Mammary epithelial cell (primary cell): ENCODE measurements at regions of chr20 and their contacts with region 1.

Region 1: GRCh38 chr20:50790651-50791277 is 4.1 kb upstream of the BCAS4 start:
- DNase-seq: peak; percentile 83
- H3K4me3 ChIP-seq: no peak overlapping the region
- H3K27ac ChIP-seq: peak overlapping the region; percentile 83
- H3K4me1 ChIP-seq: peaks cover 14% of the 10 kb centered on the region
- H3K27me3 ChIP-seq: no peaks in the 10 kb centered on the region
- CTCF ChIP-seq: peak; percentile 73 to 92

Region 2: DNA sequence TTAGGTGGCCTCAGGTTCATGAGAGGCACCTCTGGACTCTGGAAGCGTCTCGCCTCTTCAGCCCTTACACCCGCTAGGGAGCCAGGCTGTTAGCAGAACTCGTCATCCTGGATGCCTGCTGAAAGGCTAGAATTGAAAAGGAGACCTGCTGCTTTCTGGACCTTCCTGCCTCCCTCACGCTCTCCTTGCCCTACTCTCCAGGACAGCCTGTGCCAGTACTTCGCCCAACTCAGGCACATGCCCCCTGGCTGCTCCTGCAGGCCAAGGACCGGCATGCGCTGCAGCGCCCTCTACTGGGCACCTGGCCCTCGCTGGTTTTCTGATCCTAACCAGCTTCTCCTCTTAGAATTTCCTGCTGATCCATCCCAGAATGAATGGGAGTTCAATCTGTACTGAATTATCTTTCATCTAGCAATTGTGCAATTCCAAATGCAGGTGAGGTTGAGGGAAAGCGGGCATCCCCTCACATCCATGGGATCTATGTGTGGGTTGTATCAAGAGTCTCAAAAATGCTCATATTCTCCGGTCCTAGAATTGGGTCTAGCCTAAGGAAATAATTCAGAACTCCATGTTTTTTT is 202.6 kb before region 1 on chr20:
- CTCF ChIA-PET with region 1: no interaction called
- dilution Hi-C with region 1: no loop called
- in situ Hi-C with region 1: no loop called
- intact Hi-C with region 1: loop called (anchors 5 kb)
- DNase-seq: peak; percentile 54
- H3K4me3 ChIP-seq: no peak overlapping the region
- H3K27ac ChIP-seq: no peak overlapping the region
- H3K4me1 ChIP-seq: peaks cover 25% of the 10 kb centered on the region
- H3K27me3 ChIP-seq: no peaks in the 10 kb centered on the region
- CTCF ChIP-seq: peak; percentile 96 to 99

Region 3: DNA sequence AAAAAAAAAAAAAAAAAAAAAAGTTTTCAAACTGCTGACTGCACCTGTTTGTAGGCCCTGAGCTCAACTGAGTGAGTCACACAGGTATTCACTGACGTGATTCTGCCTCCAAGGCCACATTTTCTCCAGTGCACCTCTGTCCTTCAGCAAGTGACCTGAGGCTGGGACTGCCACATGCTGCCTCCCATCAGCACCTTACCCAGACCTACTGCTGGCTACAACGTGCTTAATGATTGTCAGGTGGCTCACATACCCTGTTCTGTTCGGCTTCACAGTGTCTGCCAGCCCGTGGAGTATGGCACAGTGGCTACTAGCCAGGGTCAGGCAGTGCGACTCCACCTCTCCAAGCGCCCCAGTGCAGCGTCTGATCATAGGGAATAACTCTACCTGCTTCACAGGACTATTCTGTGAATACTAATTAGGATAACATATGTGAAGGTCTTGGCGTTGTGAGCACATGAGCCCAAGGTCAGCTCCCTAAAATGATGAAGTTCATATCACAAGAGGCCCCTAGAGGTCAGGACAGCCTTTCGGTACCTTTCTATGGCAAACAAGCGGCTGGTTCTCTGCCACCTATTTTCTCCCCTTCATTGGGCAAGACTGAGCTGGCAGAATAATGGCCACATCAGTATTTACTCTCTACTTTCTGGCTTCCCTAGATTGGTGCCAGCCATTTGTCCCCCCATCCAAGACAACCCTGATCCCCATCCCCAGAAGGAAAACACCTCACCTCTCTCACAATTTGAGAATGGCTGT is 127.5 kb before region 1 on chr20:
- CTCF ChIA-PET with region 1: interaction called, 11 read pairs
- dilution Hi-C with region 1: loop called (anchors 10 kb)
- in situ Hi-C with region 1: no loop called
- intact Hi-C with region 1: loop called (anchors 1 kb)
- DNase-seq: peak; percentile 71
- H3K4me3 ChIP-seq: no peak overlapping the region
- H3K27ac ChIP-seq: no peak overlapping the region
- H3K4me1 ChIP-seq: peaks cover 4% of the 10 kb centered on the region
- H3K27me3 ChIP-seq: no peaks in the 10 kb centered on the region
- CTCF ChIP-seq: peak; percentile 35 to 53

Region 4: DNA sequence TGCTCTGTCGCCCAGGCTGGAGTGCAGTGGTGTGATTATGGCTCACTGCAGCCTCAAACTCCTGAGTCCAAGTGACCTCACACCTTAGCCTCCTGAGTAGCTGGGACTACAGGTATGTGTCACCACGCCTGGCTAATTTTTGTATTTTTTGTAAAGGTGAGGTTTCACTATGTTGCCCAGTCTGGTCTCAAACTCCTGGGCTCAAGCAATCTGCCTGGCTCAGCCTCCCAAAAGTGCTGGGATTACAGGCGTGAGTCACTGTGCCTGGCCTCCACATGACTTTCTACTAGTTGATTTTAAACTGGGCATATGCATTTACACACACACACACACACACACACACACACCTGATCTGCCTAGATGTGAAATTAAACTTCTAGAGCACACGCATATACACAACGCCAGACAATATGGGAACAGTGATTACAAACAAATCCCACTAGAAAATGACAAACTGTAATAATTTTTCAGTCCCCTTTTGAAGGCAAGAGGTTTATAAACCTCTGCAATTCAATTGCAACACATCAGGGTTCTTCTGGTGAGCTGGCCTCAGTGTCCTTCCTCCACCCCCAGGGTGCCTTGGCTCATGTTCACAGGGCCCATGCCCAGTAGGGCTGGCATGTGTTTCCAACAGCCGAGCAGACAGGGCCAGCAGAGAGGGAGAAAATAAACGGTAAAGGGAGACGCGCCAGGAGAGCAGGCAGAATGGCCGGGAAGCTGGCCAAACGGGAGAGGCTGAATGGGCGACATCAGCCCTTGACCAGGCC is 28.1 kb before region 1 on chr20:
- CTCF ChIA-PET with region 1: interaction called, 9 read pairs
- dilution Hi-C with region 1: no loop called
- in situ Hi-C with region 1: no loop called
- intact Hi-C with region 1: loop called (anchors 1 kb)
- DNase-seq: peak; percentile 82
- H3K4me3 ChIP-seq: peak overlapping the region in 2 of 3 experiments; percentile 0 to 28
- H3K27ac ChIP-seq: peak overlapping the region; percentile 90
- H3K4me1 ChIP-seq: peaks cover 37% of the 10 kb centered on the region
- H3K27me3 ChIP-seq: no peaks in the 10 kb centered on the region
- CTCF ChIP-seq: no peak

Region 5: DNA sequence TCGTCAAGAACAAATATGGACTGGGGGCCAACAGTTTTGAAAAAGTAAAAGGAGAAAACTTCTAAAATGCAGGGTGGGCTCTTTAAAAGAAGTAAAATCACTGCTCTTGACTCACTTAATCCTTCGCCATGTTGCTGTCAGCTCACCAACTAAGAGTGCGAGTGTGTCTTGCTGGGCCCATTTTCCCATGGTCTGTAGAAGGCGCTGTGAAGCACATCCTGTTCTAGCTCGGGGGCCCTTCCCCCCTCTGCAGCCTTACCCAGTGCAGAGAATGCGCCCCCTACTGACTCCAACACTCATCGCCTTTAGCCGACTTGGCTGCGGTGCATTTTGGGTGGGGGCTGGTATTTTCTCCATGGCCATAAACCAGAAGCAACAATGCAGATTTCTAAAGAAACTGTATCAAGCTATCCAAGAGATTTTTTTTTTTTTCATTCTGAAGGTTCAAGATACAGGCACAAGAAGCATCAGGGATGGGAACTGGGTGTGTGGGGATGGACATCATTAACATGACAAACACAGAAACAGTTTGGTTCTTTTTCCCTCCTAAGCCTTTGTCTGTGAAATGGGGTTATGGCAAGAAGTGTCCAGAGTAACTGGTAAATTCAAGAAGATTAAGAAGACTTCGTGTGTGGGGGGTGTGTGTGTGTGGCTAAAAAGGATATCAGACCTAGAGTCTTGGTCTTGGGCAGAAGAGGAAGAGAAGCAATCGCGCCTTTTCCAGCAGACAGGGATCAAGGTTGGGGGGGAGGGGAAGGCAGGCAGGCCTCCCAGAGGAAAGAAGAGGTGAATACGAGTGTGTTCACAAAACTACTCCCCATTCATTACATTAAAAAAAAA is 138.8 kb after region 1 on chr20:
- CTCF ChIA-PET with region 1: interaction called, 11 read pairs
- dilution Hi-C with region 1: no loop called
- in situ Hi-C with region 1: loop called in 1 of 2 experiments (anchors 10 kb)
- intact Hi-C with region 1: loop called (anchors 1 kb)
- DNase-seq: peak; percentile 87
- H3K4me3 ChIP-seq: peak overlapping the region; percentile 70 to 93 (median 80)
- H3K27ac ChIP-seq: peak overlapping the region; percentile 74
- H3K4me1 ChIP-seq: peaks cover 20% of the 10 kb centered on the region
- H3K27me3 ChIP-seq: no peaks in the 10 kb centered on the region
- CTCF ChIP-seq: peak; percentile 97 to 100

Region 6: GRCh38 chr20:51220293-51220706 is 429.5 kb after region 1 on chr20:
- CTCF ChIA-PET with region 1: no interaction called
- dilution Hi-C with region 1: no loop called
- in situ Hi-C with region 1: no loop called
- intact Hi-C with region 1: loop called (anchors 2 kb)
- DNase-seq: no peak
- H3K4me3 ChIP-seq: no peak overlapping the region
- H3K27ac ChIP-seq: no peak overlapping the region
- H3K4me1 ChIP-seq: no peaks in the 10 kb centered on the region
- H3K27me3 ChIP-seq: no peaks in the 10 kb centered on the region
- CTCF ChIP-seq: peak; percentile 87 to 95